ENCODE measurements at regions of chr1 and their contacts with region 1.

Region 1: DNA sequence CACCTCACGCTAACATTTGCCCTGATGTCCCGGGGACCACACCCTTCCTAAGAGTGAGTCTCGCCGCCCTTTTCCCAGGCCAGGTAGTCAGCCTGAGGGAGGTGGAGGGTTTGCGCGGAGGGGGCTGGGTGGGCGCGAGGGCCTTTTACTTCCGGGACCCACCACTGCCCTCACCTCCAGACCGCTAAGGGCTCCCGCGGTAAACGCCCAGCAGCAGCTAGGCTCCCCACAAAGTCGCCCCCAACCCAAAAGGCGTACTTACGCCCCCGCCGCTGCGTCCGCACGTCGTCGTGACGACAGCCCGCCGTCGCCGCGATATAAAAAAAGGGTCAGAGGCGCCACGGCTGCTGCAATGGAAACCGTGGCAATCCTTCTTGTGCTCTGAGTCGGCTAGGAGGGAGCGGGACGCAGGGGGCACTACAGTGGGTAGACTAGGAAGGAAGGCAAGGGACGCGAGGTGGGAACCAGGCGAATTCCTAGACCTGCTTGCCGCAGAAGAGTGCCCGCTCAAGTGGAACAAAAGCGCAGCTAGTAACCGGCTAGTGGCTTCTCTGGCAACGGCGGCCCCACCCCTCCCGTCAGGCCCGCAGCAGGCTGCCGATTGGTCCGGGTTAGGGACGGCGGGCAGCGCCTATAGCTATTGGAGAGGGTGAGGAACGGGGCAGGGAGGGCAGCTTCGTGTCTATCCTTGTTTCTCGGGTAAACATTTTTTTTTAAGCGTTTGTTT is at the start of gene ODF2L:
- DNase-seq: peak; percentile 74 to 91 (median 89)
- ATAC-seq: peak; percentile 98
- H3K4me3 ChIP-seq: peak within 1 kb of the TSS; percentile 91 to 97
- H3K4me3 Mint-ChIP-seq: peak within 1 kb of the TSS; percentile 99
- H3K27ac ChIP-seq: peak within 1 kb of the TSS; percentile 85 to 91
- H3K27ac Mint-ChIP-seq: peak within 1 kb of the TSS; percentile 97
- H3K4me1 ChIP-seq: peaks cover 16% of the 10 kb centered on the region
- H3K4me1 Mint-ChIP-seq: peaks cover 53% of the 10 kb centered on the region
- H3K27me3 ChIP-seq: no peaks in the 10 kb centered on the region
- H3K27me3 Mint-ChIP-seq: no peaks in the 10 kb centered on the region
- CTCF ChIP-seq: no peak
- total RNA-seq, gene ODF2L: 49.3 to 49.6 TPM

Region 2: DNA sequence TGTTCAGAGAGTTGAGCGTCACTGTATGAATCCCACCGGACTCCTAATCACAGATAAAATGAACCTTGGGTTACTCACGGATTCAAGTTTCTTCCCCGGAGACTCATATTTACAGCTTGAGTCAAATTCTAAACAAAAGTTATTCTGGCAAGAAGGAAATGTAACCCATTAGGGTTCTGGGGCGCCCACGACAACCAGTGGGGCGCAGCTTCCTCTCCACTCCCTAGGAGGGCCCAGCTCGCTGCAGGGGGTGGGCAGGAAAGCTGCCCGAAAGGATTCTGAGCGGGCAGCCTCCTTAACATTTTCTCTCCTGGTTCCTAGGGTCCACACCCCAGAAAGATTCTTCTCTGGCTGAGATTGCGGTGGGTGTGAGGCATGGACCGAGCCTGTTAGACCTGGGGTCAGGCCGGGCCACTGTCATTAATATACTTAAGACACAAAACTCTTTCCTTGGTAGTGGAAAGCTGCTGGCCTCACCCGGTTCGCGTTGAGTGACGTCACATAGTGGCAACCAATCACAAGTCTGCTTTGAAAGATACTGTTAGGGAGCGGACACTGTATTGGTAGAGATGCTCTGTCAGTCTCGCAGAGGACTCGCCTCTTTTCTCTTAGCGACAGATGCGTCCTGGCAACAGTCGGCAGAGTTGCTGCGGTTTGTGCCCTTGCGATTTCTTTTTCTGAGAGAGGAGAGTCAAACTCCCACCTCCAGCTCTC is 1334.1 kb before region 1 on chr1:
- CTCF ChIA-PET with region 1: no interaction called
- POLR2A ChIA-PET with region 1: no interaction called
- intact Hi-C with region 1: loop called in 1 of 2 experiments (anchors 2 kb)
- DNase-seq: peak; percentile 64 to 96 (median 81)
- ATAC-seq: peak; percentile 99
- H3K4me3 ChIP-seq: peak overlapping the region; percentile 38 to 49
- H3K4me3 Mint-ChIP-seq: peak overlapping the region; percentile 84
- H3K27ac ChIP-seq: peak overlapping the region in 1 of 2 experiments; percentile 29
- H3K27ac Mint-ChIP-seq: peak overlapping the region; percentile 72
- H3K4me1 ChIP-seq: peaks cover 4% of the 10 kb centered on the region
- H3K4me1 Mint-ChIP-seq: peaks cover 14% of the 10 kb centered on the region
- H3K27me3 ChIP-seq: no peaks in the 10 kb centered on the region
- H3K27me3 Mint-ChIP-seq: peaks cover 12% of the 10 kb centered on the region
- CTCF ChIP-seq: no peak

Region 3: DNA sequence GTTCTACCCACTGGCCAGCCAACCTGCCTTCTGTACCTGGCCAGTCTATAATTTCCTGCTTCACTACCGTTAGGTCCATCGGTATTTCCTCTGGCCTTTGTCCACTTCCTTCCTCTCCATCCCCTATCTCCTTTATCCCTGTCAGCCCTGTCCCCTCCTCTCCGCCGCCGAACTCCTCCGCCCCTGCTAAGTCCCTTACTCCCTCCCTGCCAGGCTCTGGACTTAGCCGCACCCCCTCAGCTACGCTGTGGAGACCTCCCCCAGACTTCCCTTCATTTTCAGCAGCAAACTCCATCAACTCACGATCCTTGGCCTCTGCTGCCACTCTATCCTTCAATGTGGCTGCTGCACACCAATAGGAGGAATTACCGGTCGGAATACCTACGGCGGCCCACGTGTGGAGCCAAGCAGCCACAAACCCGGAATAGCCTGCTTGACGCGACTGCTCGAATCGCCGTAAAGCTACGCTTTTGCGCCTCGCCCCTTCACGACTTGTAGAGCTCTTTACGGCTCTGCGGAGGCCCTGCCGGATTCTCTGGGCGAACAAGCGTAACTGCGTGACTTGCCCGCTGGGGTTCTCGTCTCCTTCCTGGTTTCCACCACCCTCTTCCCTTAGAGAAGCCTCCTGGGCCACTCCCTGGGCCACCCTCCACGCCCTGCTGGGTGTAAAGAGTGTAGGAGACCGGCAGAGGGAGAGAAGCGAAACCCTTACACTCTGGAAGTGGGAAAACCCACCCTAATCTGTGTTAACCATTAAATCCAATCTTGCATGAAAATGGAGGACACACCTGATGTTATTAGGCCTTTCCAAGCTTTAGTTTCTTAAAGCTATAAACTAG is 687.7 kb before region 1 on chr1 and contains the start of gene ZNHIT6:
- CTCF ChIA-PET with region 1: no interaction called
- POLR2A ChIA-PET with region 1: no interaction called
- intact Hi-C with region 1: loop called in 1 of 2 experiments (anchors 10 kb)
- DNase-seq: peak; percentile 72 to 95 (median 84)
- ATAC-seq: peak; percentile 95
- H3K4me3 ChIP-seq: peak within 1 kb of the TSS; percentile 89 to 93
- H3K4me3 Mint-ChIP-seq: no peak within 1 kb of the TSS
- H3K27ac ChIP-seq: peak within 1 kb of the TSS; percentile 67 to 79
- H3K27ac Mint-ChIP-seq: no peak within 1 kb of the TSS
- H3K4me1 ChIP-seq: peaks cover 17% of the 10 kb centered on the region
- H3K4me1 Mint-ChIP-seq: peaks cover 30% of the 10 kb centered on the region
- H3K27me3 ChIP-seq: no peaks in the 10 kb centered on the region
- H3K27me3 Mint-ChIP-seq: no peaks in the 10 kb centered on the region
- CTCF ChIP-seq: no peak
- total RNA-seq, gene ZNHIT6: 14.4 to 15.3 TPM

Region 4: DNA sequence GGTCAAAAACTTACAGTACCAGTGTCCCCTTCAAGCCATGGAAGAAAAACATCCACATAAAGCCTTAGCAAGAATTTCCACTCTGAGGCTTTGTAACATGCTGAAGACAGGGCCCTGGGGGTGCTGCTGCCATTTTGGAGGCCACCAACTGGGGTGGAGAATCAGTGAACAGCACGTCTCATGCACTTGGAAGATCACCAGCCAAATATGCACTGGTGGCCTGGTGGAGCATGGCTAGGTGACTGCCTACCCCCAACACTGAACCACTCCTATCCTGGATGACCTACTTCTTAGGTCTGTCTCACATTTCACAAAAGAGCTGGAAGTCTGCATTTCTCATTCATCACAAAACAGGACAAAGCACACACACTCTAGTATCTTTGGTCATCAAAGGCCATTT is 365.8 kb before region 1 on chr1:
- CTCF ChIA-PET with region 1: no interaction called
- POLR2A ChIA-PET with region 1: no interaction called
- intact Hi-C with region 1: no loop called
- DNase-seq: no peak
- ATAC-seq: no peak
- H3K4me3 ChIP-seq: no peak overlapping the region
- H3K4me3 Mint-ChIP-seq: no peak overlapping the region
- H3K27ac ChIP-seq: no peak overlapping the region
- H3K27ac Mint-ChIP-seq: no peak overlapping the region
- H3K4me1 ChIP-seq: no peaks in the 10 kb centered on the region
- H3K4me1 Mint-ChIP-seq: no peaks in the 10 kb centered on the region
- H3K27me3 ChIP-seq: no peaks in the 10 kb centered on the region
- H3K27me3 Mint-ChIP-seq: no peaks in the 10 kb centered on the region
- CTCF ChIP-seq: no peak

Region 5: GRCh38 chr1:86419277-86419903 is 23.5 kb after region 1 on chr1:
- CTCF ChIA-PET with region 1: interaction called, 4 read pairs
- POLR2A ChIA-PET with region 1: no interaction called
- intact Hi-C with region 1: loop called in 1 of 2 experiments (anchors 1 kb)
- DNase-seq: peak; percentile 8 to 71 (median 48)
- ATAC-seq: peak; percentile 96
- H3K4me3 ChIP-seq: no peak overlapping the region
- H3K4me3 Mint-ChIP-seq: peak overlapping the region; percentile 64
- H3K27ac ChIP-seq: no peak overlapping the region
- H3K27ac Mint-ChIP-seq: peak overlapping the region; percentile 61
- H3K4me1 ChIP-seq: peaks cover 3% of the 10 kb centered on the region
- H3K4me1 Mint-ChIP-seq: peaks cover 5% of the 10 kb centered on the region
- H3K27me3 ChIP-seq: no peaks in the 10 kb centered on the region
- H3K27me3 Mint-ChIP-seq: peaks cover 3% of the 10 kb centered on the region
- CTCF ChIP-seq: peak; percentile 71

Region 6: GRCh38 chr1:86714159-86714558 is 318.2 kb after region 1 on chr1:
- CTCF ChIA-PET with region 1: no interaction called
- POLR2A ChIA-PET with region 1: no interaction called
- intact Hi-C with region 1: loop called in 1 of 2 experiments (anchors 5 kb)
- DNase-seq: no peak
- ATAC-seq: peak; percentile 14
- H3K4me3 ChIP-seq: no peak overlapping the region
- H3K4me3 Mint-ChIP-seq: no peak overlapping the region
- H3K27ac ChIP-seq: no peak overlapping the region
- H3K27ac Mint-ChIP-seq: peak overlapping the region; percentile 73
- H3K4me1 ChIP-seq: peaks cover 15% of the 10 kb centered on the region
- H3K4me1 Mint-ChIP-seq: peaks cover 55% of the 10 kb centered on the region
- H3K27me3 ChIP-seq: no peaks in the 10 kb centered on the region
- H3K27me3 Mint-ChIP-seq: no peaks in the 10 kb centered on the region
- CTCF ChIP-seq: no peak